ENCODE measurements at regions of chr6 and their contacts with region 1.

Region 1: DNA sequence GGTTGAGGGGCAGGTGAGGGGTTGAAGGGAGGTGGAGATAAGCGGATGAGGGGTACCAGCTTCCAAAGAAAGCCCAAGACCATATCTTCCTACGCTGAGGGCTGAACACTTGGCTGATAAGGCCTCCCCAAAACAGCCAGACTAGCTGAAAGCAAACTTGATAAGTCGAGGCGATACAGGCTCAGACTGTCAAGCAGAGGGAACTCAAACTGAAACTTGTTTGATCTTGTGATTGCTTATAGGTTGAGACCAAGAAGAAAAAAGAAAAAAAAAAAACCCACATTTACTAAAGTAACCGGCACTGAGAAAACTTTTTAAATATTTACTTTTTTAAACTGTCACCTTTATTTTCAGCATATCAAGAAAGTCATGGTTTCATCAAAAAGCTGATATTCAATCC is 73.6 kb downstream of the TRERF1 start:
- DNase-seq: peak; percentile 58
- H3K4me3 Mint-ChIP-seq: peak overlapping the region; percentile 55
- H3K27ac Mint-ChIP-seq: peak overlapping the region; percentile 86
- H3K4me1 Mint-ChIP-seq: peaks cover 62% of the 10 kb centered on the region
- H3K27me3 Mint-ChIP-seq: no peaks in the 10 kb centered on the region

Region 2: GRCh38 chr6:42367353-42368011 is 10.6 kb before region 1 on chr6:
- CTCF ChIA-PET with region 1: interaction called, 11 read pairs
- DNase-seq: peak; percentile 52
- H3K4me3 Mint-ChIP-seq: peak overlapping the region; percentile 53
- H3K27ac Mint-ChIP-seq: peak overlapping the region; percentile 96
- H3K4me1 Mint-ChIP-seq: peaks cover 64% of the 10 kb centered on the region
- H3K27me3 Mint-ChIP-seq: no peaks in the 10 kb centered on the region